MCF 10A (cell line): ENCODE measurements at regions of chr21 and their contacts with region 1.

Region 1: DNA sequence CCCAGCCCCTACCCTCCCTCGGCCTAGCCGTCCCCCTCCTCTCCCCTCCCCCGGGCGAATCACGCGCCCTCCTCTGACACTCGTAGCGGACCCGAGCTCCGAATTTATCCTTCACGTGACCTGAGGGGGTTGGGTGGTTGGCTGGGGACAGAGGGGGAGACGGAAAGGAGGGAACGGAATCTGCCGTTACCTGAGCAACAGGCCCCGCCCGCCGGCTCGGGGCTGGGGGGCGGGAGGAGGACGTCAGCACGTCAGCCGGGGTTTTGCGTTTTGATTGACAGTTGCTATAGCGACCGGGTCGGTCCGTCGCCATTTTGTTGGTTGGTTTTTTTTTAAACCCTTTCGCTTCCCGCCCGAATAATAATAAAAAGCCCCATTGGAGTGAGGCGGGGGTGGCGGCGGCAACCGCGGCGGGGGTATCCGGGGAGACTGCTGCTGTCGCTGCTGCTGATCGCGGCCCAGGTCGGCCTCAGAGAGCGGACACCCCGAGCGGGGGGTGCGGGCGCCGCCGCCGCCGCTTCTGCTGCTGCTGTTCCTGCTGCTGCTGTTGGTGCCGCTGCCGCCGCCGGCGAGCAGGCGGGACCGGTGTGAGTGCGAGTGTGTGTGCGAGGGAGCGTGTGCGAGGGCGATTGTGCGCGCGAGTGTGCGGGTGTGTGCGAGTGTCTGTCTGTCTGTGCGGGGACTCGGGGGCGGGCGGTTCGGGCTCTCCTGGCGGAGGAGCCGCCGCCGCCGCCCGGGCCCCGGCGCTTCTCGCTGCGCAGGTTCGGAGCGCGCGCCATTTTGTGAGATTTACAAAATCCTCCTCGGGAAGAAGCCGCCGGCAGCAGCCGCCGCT is at the start of gene DYRK1A:
- DNase-seq: peak; percentile 99
- H3K4me3 Mint-ChIP-seq: peak within 1 kb of the TSS; percentile 99
- H3K27ac Mint-ChIP-seq: peak within 1 kb of the TSS; percentile 100
- H3K4me1 Mint-ChIP-seq: peaks cover 28% of the 10 kb centered on the region
- H3K27me3 Mint-ChIP-seq: no peaks in the 10 kb centered on the region
- CTCF ChIP-seq: no peak
- total RNA-seq, gene DYRK1A: 58.6 and 63.1 TPM in 2 replicates

Region 2: GRCh38 chr21:37267269-37268184 is 99.2 kb before region 1 on chr21 and contains the start of gene VPS26C:
- CTCF ChIA-PET with region 1: interaction called, 6 read pairs
- POLR2A ChIA-PET with region 1: interaction called, 122 read pairs
- intact Hi-C with region 1: loop called (anchors 1 kb)
- DNase-seq: peak; percentile 99
- H3K4me3 Mint-ChIP-seq: peak within 1 kb of the TSS; percentile 94
- H3K27ac Mint-ChIP-seq: peak within 1 kb of the TSS; percentile 100
- H3K4me1 Mint-ChIP-seq: peaks cover 10% of the 10 kb centered on the region
- H3K27me3 Mint-ChIP-seq: no peaks in the 10 kb centered on the region
- CTCF ChIP-seq: no peak
- total RNA-seq, gene VPS26C: 38.5 and 61.6 TPM in 2 replicates

Region 3: GRCh38 chr21:37348664-37349063 is 18.0 kb before region 1 on chr21:
- CTCF ChIA-PET with region 1: interaction called, 4 read pairs
- POLR2A ChIA-PET with region 1: interaction called, 45 read pairs
- intact Hi-C with region 1: no loop called
- DNase-seq: peak; percentile 18
- H3K4me3 Mint-ChIP-seq: no peak overlapping the region
- H3K27ac Mint-ChIP-seq: no peak overlapping the region
- H3K4me1 Mint-ChIP-seq: no peaks in the 10 kb centered on the region
- H3K27me3 Mint-ChIP-seq: no peaks in the 10 kb centered on the region
- CTCF ChIP-seq: no peak

Region 4: DNA sequence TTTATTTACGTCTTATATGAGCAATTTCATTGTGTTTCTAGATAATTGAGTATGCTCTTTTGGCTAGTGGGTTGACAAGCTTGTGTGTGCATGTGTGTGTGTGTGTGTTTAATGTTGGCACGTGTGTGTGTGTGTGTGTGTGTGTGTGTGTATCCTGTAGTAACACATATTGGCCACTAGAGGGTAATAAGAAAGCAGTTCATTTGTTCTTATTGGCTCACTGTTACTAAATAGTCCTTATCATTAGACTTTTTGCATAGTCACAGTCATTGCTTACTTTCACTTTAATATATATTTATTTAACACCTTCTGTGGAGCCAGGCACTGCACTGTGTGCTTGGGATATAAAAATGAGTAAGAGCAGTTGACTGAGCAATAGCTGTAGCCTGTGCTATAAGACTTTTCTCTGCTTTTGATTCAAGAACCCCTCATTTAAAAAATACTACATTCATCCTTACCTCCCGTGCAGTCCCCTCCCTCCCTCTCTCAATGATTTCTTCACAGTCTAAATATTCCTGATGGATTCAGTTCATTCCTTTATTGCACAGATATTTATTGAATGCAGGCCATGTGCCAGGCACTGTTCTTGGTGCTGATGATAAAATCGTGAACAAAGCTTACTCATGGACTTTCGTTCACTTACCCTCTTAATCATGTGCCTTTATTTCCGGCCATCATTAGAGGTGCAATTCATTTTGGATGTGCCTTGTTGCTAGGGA is 96.5 kb after region 1 on chr21:
- CTCF ChIA-PET with region 1: no interaction called
- POLR2A ChIA-PET with region 1: interaction called, 3 read pairs
- intact Hi-C with region 1: loop called (anchors 5 kb)
- DNase-seq: peak; percentile 52
- H3K4me3 Mint-ChIP-seq: peak overlapping the region; percentile 70
- H3K27ac Mint-ChIP-seq: peak overlapping the region; percentile 18
- H3K4me1 Mint-ChIP-seq: peaks cover 40% of the 10 kb centered on the region
- H3K27me3 Mint-ChIP-seq: no peaks in the 10 kb centered on the region
- CTCF ChIP-seq: peak; percentile 24